Mammary epithelial cell (primary cell): ENCODE measurements at regions of chr1 and their contacts with region 1.

Region 1: GRCh38 chr1:999725-1000356 is at the start of gene HES4:
- DNase-seq: peak; percentile 82
- H3K4me3 ChIP-seq: peak within 1 kb of the TSS; percentile 42 to 54 (median 50)
- H3K27ac ChIP-seq: peak within 1 kb of the TSS; percentile 45
- H3K4me1 ChIP-seq: peaks cover 30% of the 10 kb centered on the region
- H3K27me3 ChIP-seq: peaks cover 17% of the 10 kb centered on the region
- CTCF ChIP-seq: no peak
- total RNA-seq, gene HES4: 6.4 to 24.7 TPM

Region 2: GRCh38 chr1:1019122-1019999 is 19.5 kb after region 1 on chr1:
- CTCF ChIA-PET with region 1: interaction called, 13 read pairs
- dilution Hi-C with region 1: no loop called
- in situ Hi-C with region 1: no loop called
- intact Hi-C with region 1: no loop called
- DNase-seq: peak; percentile 78
- H3K4me3 ChIP-seq: peak overlapping the region in 1 of 3 experiments; percentile 48
- H3K27ac ChIP-seq: no peak overlapping the region
- H3K4me1 ChIP-seq: peaks cover 34% of the 10 kb centered on the region
- H3K27me3 ChIP-seq: no peaks in the 10 kb centered on the region
- CTCF ChIP-seq: peak in 1 of 2 donors; percentile 54

Region 3: GRCh38 chr1:1079408-1080121 is 79.7 kb after region 1 on chr1:
- CTCF ChIA-PET with region 1: no interaction called
- dilution Hi-C with region 1: no loop called
- in situ Hi-C with region 1: no loop called
- intact Hi-C with region 1: no loop called
- DNase-seq: peak; percentile 91
- H3K4me3 ChIP-seq: peak overlapping the region in 2 of 3 experiments; percentile 6 to 14
- H3K27ac ChIP-seq: peak overlapping the region; percentile 4
- H3K4me1 ChIP-seq: peaks cover 15% of the 10 kb centered on the region
- H3K27me3 ChIP-seq: no peaks in the 10 kb centered on the region
- CTCF ChIP-seq: no peak